AG04450 (cell line): ENCODE measurements at regions of chr2 and their contacts with region 1.

Region 1: DNA sequence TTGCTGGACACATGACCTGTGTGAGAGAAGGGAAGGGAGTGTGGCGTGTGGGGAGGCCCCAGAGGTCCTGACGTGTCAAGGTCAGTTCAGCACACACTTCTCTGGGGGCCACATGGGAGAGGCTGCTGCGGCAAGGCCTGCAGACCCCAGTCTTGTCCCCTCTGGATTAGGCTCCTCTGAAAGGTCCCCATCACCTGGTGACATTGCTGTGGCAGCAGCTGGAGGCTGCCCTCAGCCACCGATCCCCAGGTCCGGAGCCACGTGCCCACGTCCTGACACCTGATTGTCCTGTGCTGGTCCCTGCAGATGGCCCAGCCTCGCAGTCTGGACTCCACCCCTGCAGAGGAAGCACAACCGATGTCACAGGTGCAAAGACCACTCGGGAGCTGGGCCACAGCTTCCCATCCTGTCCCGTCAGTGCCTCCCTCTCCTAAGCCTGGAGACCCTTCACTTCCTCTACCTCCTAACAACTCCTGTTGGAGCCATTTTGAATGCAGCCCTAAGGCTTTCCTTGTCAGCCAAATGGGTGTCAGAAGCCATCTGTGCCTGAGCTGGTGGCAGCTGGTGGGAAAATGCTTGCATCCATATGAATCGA is 12.7 kb downstream of the TMEM177 start:
- DNase-seq: no peak
- H3K4me3 ChIP-seq: no peak overlapping the region
- H3K27ac ChIP-seq: no peak overlapping the region
- H3K27me3 ChIP-seq: peaks cover under 1% of the 10 kb centered on the region
- CTCF ChIP-seq: no peak

Region 2: DNA sequence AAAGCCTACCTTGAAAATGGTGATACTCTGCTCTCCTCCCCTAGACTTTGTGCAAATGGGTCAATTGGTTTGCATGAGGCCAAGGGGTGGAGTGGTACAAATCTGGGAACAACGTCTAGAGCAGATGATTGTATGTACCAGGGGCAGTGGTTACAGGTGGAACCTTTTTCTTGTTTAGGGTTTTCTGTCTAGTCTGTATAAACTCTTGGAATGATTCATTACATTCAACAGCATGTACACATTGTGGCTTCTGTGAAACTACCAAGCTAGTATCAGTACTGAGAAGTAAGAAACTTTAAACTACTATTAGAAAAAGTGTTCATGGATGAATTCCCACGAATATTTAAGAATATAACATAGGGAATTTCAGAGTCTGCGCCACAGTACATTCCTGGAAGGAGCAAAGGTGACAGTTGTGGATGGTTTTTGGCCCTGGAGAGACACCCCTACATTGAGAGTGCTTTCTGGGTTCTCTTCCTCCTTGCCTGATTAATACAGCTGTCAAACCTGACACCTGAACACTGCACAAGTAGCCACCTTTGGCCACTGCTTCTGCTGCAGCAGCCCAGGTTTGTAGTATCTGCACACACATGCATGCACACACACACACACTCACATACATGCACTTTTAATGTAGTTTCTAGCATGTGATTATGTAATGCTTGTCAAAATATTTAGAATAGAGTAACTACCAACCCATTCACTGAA is 117.5 kb before region 1 on chr2:
- CTCF ChIA-PET with region 1: no interaction called
- POLR2A ChIA-PET with region 1: no interaction called
- DNase-seq: no peak
- H3K4me3 ChIP-seq: no peak overlapping the region
- H3K27ac ChIP-seq: no peak overlapping the region
- H3K27me3 ChIP-seq: no peaks in the 10 kb centered on the region
- CTCF ChIP-seq: no peak

Region 3: GRCh38 chr2:119630121-119630520 is 61.6 kb before region 1 on chr2:
- CTCF ChIA-PET with region 1: no interaction called
- POLR2A ChIA-PET with region 1: no interaction called
- DNase-seq: no peak
- H3K4me3 ChIP-seq: no peak overlapping the region
- H3K27ac ChIP-seq: no peak overlapping the region
- H3K27me3 ChIP-seq: peaks cover 7% of the 10 kb centered on the region
- CTCF ChIP-seq: no peak

Region 4: GRCh38 chr2:119702918-119703401 is 11.2 kb after region 1 on chr2:
- CTCF ChIA-PET with region 1: interaction called, 15 read pairs
- POLR2A ChIA-PET with region 1: no interaction called
- DNase-seq: no peak
- H3K4me3 ChIP-seq: no peak overlapping the region
- H3K27ac ChIP-seq: no peak overlapping the region
- H3K27me3 ChIP-seq: peaks cover 12% of the 10 kb centered on the region
- CTCF ChIP-seq: peak; percentile 98